ENCODE measurements at regions of chr20 and their contacts with region 1.

Region 1: DNA sequence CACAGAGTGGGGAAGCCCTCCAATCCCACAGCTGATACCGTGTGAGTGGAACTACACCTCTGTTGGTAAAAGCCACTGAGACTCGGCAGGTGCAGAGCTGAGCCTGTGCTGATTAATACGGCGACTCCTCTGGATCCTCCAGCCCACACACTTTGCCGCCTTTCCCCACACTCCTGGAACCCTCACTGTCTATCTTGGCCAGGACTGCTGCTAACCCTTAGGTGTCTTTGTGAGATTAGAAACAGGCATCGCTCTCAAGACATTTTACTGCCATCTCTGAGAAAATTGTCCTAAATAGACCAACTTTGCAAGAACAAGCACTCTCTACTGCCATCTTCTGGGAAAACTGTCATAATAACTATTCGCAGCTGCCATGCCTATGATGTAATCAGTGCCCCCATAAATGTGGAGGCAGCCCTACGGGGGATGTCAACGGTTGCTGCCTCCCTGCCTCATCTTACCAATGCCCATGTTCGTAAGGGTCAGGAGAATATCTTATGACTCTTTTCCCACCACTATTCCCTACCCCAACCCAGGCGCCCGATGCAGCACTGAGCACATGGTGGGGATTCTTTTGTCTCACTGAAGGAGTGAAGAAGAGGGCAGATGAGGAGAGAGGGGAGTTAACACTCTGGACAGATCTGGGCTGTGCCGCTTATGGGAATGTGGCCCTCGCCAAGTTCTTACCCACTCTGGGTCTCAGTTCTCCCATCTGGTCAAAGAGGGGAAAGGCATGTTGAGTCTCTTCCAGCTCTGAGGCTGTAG is 26.1 kb upstream of the KCNB1 start:
- DNase-seq: peak; percentile 45
- ATAC-seq: peak; percentile 53
- H3K4me3 ChIP-seq: no peak overlapping the region
- H3K27ac ChIP-seq: no peak overlapping the region
- H3K4me1 ChIP-seq: peaks cover 2% of the 10 kb centered on the region; the same call in 1 of the 2 replicates
- H3K27me3 ChIP-seq: peaks cover 8% of the 10 kb centered on the region
- CTCF ChIP-seq: peak; percentile 60
- POLR2A ChIP-seq: no peak
- RAD21 ChIP-seq: peak; percentile 61

Region 2: GRCh38 chr20:49330544-49331239 is 177.9 kb before region 1 on chr20:
- CTCF ChIA-PET with region 1: interaction called, 5 read pairs
- POLR2A ChIA-PET with region 1: no interaction called
- dilution Hi-C with region 1: no loop called
- in situ Hi-C with region 1: loop called (anchors 5 kb)
- intact Hi-C with region 1: loop called (anchors 1 kb)
- DNase-seq: no peak
- ATAC-seq: no peak
- H3K4me3 ChIP-seq: no peak overlapping the region
- H3K27ac ChIP-seq: no peak overlapping the region
- H3K4me1 ChIP-seq: peaks cover 2% of the 10 kb centered on the region; the same call in 1 of the 2 replicates
- H3K27me3 ChIP-seq: peaks cover 52% of the 10 kb centered on the region
- CTCF ChIP-seq: no peak
- POLR2A ChIP-seq: no peak
- RAD21 ChIP-seq: no peak

Region 3: DNA sequence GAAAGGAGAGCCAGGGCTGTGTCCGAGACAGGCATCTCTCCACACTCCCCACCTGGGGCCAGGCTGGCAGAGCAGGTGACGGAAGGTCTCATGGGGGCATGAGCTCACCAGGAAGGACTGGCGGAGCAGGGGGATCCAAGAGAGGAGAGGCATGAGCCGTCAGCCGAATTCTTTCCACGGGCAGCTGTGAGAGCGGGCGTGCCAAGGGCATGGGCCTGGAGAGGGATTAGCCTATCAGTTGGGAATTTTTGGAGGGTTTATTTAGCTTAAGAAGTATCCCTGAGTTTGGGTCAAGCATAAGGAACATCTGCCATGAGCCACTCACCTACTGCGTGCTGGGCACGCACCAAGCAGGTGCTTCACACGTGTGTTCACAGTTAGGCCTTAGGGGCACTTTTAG is 170.6 kb before region 1 on chr20:
- CTCF ChIA-PET with region 1: interaction called, 5 read pairs
- POLR2A ChIA-PET with region 1: no interaction called
- dilution Hi-C with region 1: no loop called
- in situ Hi-C with region 1: loop called (anchors 5 kb)
- intact Hi-C with region 1: loop called (anchors 1 kb)
- DNase-seq: no peak
- ATAC-seq: no peak
- H3K4me3 ChIP-seq: no peak overlapping the region
- H3K27ac ChIP-seq: no peak overlapping the region
- H3K4me1 ChIP-seq: peaks cover 2% of the 10 kb centered on the region; the same call in 1 of the 2 replicates
- H3K27me3 ChIP-seq: peaks cover 16% of the 10 kb centered on the region
- CTCF ChIP-seq: no peak
- POLR2A ChIP-seq: no peak
- RAD21 ChIP-seq: no peak